CD4-positive, alpha-beta memory T cell (primary cell): ENCODE measurements at regions of chr5 and their contacts with region 1.

Region 1: DNA sequence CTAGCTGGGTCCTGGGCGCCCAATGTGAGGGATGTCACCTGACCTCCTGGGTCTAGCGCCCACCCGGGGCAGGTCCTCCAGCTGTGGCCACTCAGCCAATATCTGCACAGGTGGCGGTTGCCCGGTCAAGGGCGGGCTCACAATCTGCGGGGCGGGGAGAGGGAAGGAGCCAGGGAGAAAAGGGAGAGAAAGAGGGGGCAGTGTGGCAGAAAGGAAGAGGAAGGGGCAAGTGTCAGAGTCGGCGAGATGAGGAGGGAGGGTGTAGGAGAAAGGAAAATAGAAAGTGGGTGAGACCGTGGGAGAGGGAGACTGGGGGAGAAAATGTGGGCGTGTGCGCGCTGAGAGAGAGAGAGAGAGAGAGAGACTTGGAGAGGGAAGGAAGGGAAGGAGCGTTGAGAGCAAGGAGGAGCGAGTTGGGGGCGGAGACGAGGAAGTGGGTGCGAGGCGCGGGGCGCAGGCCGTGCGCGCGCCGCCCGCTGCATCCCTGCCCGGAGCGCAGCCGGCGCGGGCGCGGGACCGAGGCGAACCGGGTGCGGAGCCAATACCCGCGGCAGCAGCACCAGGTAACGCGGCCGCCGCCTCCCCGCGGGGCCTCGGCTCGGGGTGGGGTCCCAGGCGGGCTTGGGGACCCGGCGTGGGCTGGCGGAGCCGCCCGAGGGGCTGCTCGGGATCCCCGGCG is at the start of gene HRH2:
- DNase-seq: peak; percentile 33 to 47 (median 37)
- H3K4me3 ChIP-seq: peak within 1 kb of the TSS; percentile 73 to 82
- H3K4me3 Mint-ChIP-seq: peak within 1 kb of the TSS; percentile 91 to 97 (median 96)
- H3K27ac ChIP-seq: peak within 1 kb of the TSS; percentile 34
- H3K27ac Mint-ChIP-seq: peak within 1 kb of the TSS; percentile 61 to 95 (median 88)
- H3K4me1 ChIP-seq: peaks cover 74% of the 10 kb centered on the region
- H3K4me1 Mint-ChIP-seq: peaks cover 65 to 94% (median 79%) of the 10 kb centered on the region in 4 donors
- H3K27me3 ChIP-seq: no peaks in the 10 kb centered on the region
- H3K27me3 Mint-ChIP-seq: no peaks in the 10 kb centered on the region
- total RNA-seq, gene HRH2: 4.0 to 4.2 TPM

Region 2: GRCh38 chr5:175162036-175162435 is 495.7 kb before region 1 on chr5:
- CTCF ChIA-PET with region 1: no interaction called
- POLR2A ChIA-PET with region 1: no interaction called
- intact Hi-C with region 1: no loop called
- DNase-seq: no peak
- H3K4me3 ChIP-seq: no peak overlapping the region
- H3K4me3 Mint-ChIP-seq: no peak overlapping the region
- H3K27ac ChIP-seq: no peak overlapping the region
- H3K27ac Mint-ChIP-seq: no peak overlapping the region
- H3K4me1 ChIP-seq: no peaks in the 10 kb centered on the region
- H3K4me1 Mint-ChIP-seq: no peaks in the 10 kb centered on the region
- H3K27me3 ChIP-seq: no peaks in the 10 kb centered on the region
- H3K27me3 Mint-ChIP-seq: peaks cover 9 to 10% of the 10 kb centered on the region in 2 donors

Region 3: GRCh38 chr5:175478384-175479124 is 179.2 kb before region 1 on chr5 and contains the start of gene SFXN1:
- CTCF ChIA-PET with region 1: no interaction called
- POLR2A ChIA-PET with region 1: interaction called, 11 read pairs
- intact Hi-C with region 1: loop called (anchors 2 kb)
- DNase-seq: peak; percentile 69 to 80 (median 74)
- H3K4me3 ChIP-seq: peak within 1 kb of the TSS; percentile 65 to 84
- H3K4me3 Mint-ChIP-seq: peak within 1 kb of the TSS; percentile 92 to 98 (median 96)
- H3K27ac ChIP-seq: peak within 1 kb of the TSS; percentile 60
- H3K27ac Mint-ChIP-seq: peak within 1 kb of the TSS; percentile 89 to 98 (median 93)
- H3K4me1 ChIP-seq: peaks cover 47% of the 10 kb centered on the region
- H3K4me1 Mint-ChIP-seq: peaks cover 42 to 67% (median 52%) of the 10 kb centered on the region in 4 donors
- H3K27me3 ChIP-seq: no peaks in the 10 kb centered on the region
- H3K27me3 Mint-ChIP-seq: no peaks in the 10 kb centered on the region
- total RNA-seq, gene SFXN1: 99.2 to 111 TPM